Endothelial cell of umbilical vein (primary cell): ENCODE measurements at regions of chr7 and their contacts with region 1.

Region 1: DNA sequence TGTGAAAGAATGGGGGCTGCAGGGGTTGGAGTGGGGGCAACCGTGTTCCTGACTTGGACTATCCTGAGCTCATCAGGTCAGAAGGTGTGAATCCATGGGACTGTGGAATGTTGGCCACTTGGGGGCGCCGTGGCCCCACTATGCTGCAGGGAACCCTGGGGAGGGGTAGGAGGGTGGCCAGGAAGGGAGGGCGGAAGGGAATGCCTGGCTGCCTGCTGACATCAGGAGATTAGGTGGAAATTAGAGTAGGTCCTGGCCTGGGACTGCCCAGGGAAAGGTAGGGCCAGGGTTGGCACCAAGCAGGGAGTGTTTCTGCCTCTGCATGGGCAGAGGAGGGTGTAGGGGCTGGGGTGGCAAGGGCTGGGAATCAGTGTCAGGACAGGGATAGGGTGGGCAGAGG is 65.8 kb upstream of the PRSS58 start:
- DNase-seq: no peak
- H3K4me3 ChIP-seq: no peak overlapping the region
- H3K27ac ChIP-seq: no peak overlapping the region
- H3K4me1 ChIP-seq: no peaks in the 10 kb centered on the region
- H3K27me3 ChIP-seq: no peaks in the 10 kb centered on the region
- CTCF ChIP-seq: peak in 1 of 2 donors; percentile 33
- POLR2A ChIP-seq: no peak

Region 2: DNA sequence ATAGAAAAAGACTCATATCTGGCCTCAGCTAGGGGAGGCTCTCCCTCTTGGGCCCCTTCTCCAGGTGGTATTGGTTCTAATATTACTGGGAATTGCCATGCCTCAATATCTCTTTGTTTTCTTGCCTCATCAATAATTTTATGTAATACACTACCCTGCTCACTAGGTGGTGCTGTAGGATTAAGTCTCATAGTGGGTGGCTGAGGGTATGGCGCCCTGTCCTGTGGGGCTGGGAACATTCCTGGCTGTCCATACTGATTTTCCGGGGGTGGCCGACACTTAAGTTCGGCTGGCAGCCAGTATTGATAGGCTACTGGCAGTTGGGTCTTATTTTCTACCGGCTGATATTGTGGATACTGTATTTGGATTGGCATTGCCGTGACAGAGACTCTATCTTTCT is 568.8 kb before region 1 on chr7:
- CTCF ChIA-PET with region 1: no interaction called
- POLR2A ChIA-PET with region 1: no interaction called
- dilution Hi-C with region 1: no loop called
- intact Hi-C with region 1: loop called (anchors 10 kb)
- DNase-seq: peak; percentile 11
- H3K4me3 ChIP-seq: no peak overlapping the region
- H3K27ac ChIP-seq: no peak overlapping the region
- H3K4me1 ChIP-seq: no peaks in the 10 kb centered on the region
- H3K27me3 ChIP-seq: no peaks in the 10 kb centered on the region
- CTCF ChIP-seq: peak; percentile 20 to 22
- POLR2A ChIP-seq: no peak